Gastrocnemius medialis (tissue), 4 donors: ENCODE measurements at regions of chr20 and their contacts with region 1.

Region 1: GRCh38 chr20:36605399-36606157 is at the start of gene RAB5IF:
- DNase-seq: peak; percentile 97 to 99
- ATAC-seq: peak; percentile 91 to 93
- H3K4me3 ChIP-seq: peak within 1 kb of the TSS; percentile 75 to 97 (median 90)
- H3K27ac ChIP-seq: peak within 1 kb of the TSS; percentile 79 to 98 (median 90)
- H3K4me1 ChIP-seq: peaks cover 21 to 25% of the 10 kb centered on the region in 2 donors
- H3K27me3 ChIP-seq: no peaks in the 10 kb centered on the region
- CTCF ChIP-seq: peak; percentile 81 to 97 (median 91)
- POLR2A ChIP-seq: peak; percentile 88 to 89
- total RNA-seq, gene RAB5IF: 215 to 768 (median 545) TPM

Region 2: DNA sequence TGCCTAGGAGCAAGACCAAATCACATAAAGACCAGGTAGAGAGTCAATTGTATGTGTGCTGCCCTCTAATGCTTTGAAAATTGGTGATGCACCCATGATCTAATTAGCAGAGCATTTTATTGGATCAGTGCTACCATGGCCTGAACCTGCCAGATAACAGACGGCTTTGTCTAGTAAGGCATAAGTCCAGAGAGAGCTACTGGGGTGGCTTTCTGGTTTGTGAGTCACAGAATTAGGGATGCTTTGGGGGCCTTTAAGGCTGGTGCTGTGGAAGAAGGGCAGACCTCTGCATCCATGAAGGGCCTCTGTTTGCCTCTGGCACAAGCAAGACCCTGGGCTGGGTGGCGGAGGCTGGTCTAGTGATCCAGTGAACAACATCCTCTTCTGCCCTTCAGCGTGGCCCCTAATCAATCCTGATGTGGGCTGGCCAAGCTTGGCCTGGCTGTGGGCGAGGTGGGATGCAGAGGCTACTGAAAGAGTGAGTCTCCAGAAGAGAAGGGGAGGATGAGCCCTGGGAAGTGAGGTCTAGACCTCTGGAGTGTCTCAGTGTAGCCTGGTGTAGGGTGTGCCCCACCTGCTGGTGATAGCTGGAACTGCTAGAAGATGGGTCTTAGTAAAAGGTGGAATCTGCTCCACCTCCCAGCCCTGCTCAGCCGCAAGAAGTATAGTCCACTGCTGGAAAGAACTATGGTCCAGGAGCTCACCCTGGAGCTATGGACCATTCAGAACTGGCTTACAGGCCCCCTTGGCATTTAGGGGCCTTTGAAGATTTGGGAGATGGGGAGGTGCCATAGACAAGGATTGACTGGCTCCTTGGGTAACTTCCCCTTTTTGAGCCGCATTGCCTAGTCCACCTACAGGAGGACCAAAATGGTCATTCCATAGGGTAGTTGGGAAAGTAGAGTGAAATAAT is 406.0 kb before region 1 on chr20:
- in situ Hi-C with region 1: loop called in 1 of 4 experiments (anchors 25 kb)
- intact Hi-C with region 1: loop called (anchors 1 kb)
- DNase-seq: peak; percentile 37 to 74
- ATAC-seq: peak; percentile 73 to 86
- H3K4me3 ChIP-seq: no peak overlapping the region
- H3K27ac ChIP-seq: no peak overlapping the region
- H3K4me1 ChIP-seq: peaks cover 0 to 4% of the 10 kb centered on the region in 2 donors
- H3K27me3 ChIP-seq: no peaks in the 10 kb centered on the region
- CTCF ChIP-seq: peak; percentile 73 to 90 (median 85)
- POLR2A ChIP-seq: no peak

Region 3: GRCh38 chr20:36460648-36461599 is 144.7 kb before region 1 on chr20:
- in situ Hi-C with region 1: loop called in 1 of 4 experiments (anchors 10 kb)
- intact Hi-C with region 1: loop called (anchors 2 kb)
- DNase-seq: peak; percentile 88 to 95
- ATAC-seq: peak; percentile 61 to 64
- H3K4me3 ChIP-seq: peak overlapping the region; percentile 55 to 83 (median 59)
- H3K27ac ChIP-seq: peak overlapping the region; percentile 99 to 100 (median 100)
- H3K4me1 ChIP-seq: peaks cover 33 to 35% of the 10 kb centered on the region in 2 donors
- H3K27me3 ChIP-seq: no peaks in the 10 kb centered on the region
- CTCF ChIP-seq: no peak
- POLR2A ChIP-seq: peak; percentile 99

Region 4: GRCh38 chr20:36574366-36575135 is 31.0 kb before region 1 on chr20:
- in situ Hi-C with region 1: no loop called
- intact Hi-C with region 1: loop called (anchors 2 kb)
- DNase-seq: no peak
- ATAC-seq: peak in 1 of 2 donors; percentile 23
- H3K4me3 ChIP-seq: peak overlapping the region; percentile 68 to 89 (median 72)
- H3K27ac ChIP-seq: peak overlapping the region in 3 of 4 donors; percentile 71 to 83 (median 79)
- H3K4me1 ChIP-seq: peaks cover 7 to 18% of the 10 kb centered on the region in 2 donors
- H3K27me3 ChIP-seq: peaks cover 10 to 19% (median 16%) of the 10 kb centered on the region in 3 donors
- CTCF ChIP-seq: no peak
- POLR2A ChIP-seq: no peak

Region 5: DNA sequence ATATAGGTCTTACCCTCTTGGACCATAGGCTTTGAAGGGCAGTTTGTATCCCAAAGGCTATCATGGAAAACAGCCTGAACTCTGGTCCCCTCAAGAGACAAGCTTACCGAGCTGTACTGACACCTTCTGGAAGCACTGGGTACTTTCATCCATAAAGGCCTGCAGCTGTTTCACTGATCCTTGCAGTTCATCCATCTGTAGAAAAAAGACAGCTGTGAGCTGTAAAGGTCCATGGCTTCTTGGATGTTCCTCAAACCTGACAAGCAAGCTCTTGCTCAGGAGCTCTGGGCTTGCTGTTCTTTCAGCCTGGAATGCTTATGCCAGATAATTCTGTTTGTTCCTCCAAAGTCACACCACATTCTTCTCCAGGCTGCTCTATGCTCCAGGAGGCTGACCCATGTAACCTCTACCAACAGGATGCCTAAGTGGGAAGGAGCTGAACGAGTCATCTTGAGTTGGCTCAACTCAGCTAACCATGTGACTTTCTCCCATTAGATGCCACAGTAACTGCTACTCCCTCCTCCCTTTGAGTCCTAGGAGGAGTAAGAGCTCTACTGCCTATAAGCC is 149.2 kb after region 1 on chr20:
- in situ Hi-C with region 1: loop called in 1 of 4 experiments (anchors 10 kb)
- intact Hi-C with region 1: loop called (anchors 5 kb)
- DNase-seq: peak; percentile 35 to 55
- ATAC-seq: peak; percentile 97
- H3K4me3 ChIP-seq: no peak overlapping the region
- H3K27ac ChIP-seq: peak overlapping the region in 2 of 4 donors; percentile 10 to 16
- H3K4me1 ChIP-seq: peaks cover 0 to 7% of the 10 kb centered on the region in 2 donors
- H3K27me3 ChIP-seq: no peaks in the 10 kb centered on the region
- CTCF ChIP-seq: peak; percentile 78 to 89 (median 88)
- POLR2A ChIP-seq: no peak